Activated CD4-positive, alpha-beta T cell treated with anti-CD3 and anti-CD28 coated beads, Interleukin-2, amount 10 ng/mL, durations not matched to agents 24 days and 14 days (primary cell): ENCODE measurements at regions of chr4 and their contacts with region 1.

Region 1: GRCh38 chr4:118224239-118224829 is 128.5 kb downstream of the PRSS12 start:
- DNase-seq: no peak
- H3K4me3 Mint-ChIP-seq: no peak overlapping the region
- H3K27ac Mint-ChIP-seq: no peak overlapping the region
- H3K4me1 Mint-ChIP-seq: peaks cover 3% of the 10 kb centered on the region
- H3K27me3 Mint-ChIP-seq: peaks cover 11% of the 10 kb centered on the region

Region 2: DNA sequence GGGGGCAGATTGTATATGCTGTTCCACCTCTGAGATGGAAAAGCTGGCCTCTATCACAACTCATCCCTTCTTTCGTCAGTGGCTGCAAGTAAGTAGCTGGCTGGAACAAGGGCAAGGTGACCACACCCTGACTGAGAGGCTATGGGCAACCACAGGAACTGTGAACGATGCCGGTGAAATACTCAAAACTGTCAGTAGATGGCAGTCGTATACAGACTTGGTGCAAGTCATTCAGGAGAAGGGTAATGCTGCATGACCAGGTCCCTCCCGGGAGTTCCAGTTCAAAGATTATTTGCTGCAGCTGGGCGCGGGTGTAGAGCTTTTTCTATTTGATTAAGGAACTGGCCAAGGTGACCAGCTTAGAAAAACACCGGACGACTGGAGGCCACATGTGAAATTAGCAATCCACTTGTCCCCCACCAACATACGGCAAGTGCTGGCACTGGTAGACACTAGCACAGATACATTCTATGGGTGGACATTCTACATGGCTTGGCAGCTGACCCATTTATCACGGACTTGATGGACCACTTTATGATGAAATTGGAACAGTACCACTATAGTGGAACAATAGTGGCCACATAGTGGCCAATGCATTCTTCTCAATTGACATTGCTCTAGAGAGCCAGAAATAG is 1865.6 kb before region 1 on chr4:
- intact Hi-C with region 1: loop called (anchors 2 kb)
- DNase-seq: peak; percentile 87
- H3K4me3 Mint-ChIP-seq: no peak overlapping the region
- H3K27ac Mint-ChIP-seq: no peak overlapping the region
- H3K4me1 Mint-ChIP-seq: no peaks in the 10 kb centered on the region
- H3K27me3 Mint-ChIP-seq: no peaks in the 10 kb centered on the region

Region 3: GRCh38 chr4:117447925-117448324 is 776.4 kb before region 1 on chr4:
- intact Hi-C with region 1: loop called (anchors 10 kb)
- DNase-seq: peak; percentile 68
- H3K4me3 Mint-ChIP-seq: no peak overlapping the region
- H3K27ac Mint-ChIP-seq: no peak overlapping the region
- H3K4me1 Mint-ChIP-seq: no peaks in the 10 kb centered on the region
- H3K27me3 Mint-ChIP-seq: no peaks in the 10 kb centered on the region

Region 4: DNA sequence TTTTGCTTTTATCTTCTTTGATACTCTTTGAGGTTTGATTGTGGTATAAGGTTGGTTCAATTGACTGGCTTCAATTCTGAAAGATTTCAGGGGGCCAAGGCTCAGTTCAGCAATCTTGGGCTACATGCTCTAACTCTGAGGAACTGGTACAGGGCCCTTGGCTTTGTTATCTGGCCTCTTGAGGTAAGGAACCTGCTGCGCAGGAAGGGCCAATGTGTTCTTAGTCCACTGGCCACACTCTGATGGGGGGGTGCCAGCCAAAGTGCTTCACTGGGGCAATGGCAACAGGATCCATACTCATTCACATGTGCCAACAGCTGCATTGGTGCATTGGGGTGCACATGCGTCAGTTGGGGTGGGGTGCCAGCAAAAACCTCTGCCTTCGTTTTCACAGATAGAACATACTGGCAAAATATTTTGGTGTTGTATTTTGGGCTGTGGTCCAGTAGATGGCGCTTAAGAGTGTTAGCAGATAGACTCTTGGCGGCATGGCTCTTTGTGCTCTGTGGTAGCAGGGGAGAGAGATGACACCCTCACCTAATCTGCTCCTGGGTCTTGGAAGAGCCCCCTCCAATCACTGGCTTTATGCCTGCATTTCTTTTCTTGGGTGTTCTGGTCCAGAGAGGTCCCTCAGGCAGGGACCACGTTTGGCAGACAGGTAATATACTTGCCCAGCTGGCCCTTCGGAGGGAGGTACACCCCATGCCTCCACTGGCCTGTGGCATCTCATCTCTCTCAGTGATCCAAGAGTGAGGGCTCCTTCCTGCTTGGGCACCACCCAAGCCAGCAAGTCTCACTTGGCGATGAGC is 147.2 kb before region 1 on chr4:
- intact Hi-C with region 1: loop called (anchors 1 kb)
- DNase-seq: peak; percentile 75
- H3K4me3 Mint-ChIP-seq: no peak overlapping the region
- H3K27ac Mint-ChIP-seq: no peak overlapping the region
- H3K4me1 Mint-ChIP-seq: peaks cover 5% of the 10 kb centered on the region
- H3K27me3 Mint-ChIP-seq: peaks cover 5% of the 10 kb centered on the region

Region 5: DNA sequence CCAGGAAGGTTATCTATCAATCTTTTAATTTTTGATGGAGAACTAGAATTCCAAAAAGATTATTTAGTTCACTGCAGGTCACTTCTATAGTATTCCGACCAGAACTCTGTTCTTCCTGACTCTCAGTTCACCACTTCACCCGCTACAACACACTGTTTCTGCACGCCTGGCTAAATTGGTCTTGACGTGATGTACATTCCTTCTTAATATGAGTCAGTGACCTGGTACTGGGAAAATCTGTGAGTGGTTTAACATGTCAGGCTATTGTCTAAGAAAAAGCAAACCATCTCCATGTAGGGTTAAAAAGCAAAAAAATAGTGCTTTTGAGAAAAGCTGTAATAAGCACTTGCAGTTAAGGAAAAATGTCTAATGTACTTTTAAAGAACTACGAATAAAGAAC is 69.7 kb before region 1 on chr4:
- intact Hi-C with region 1: no loop called
- DNase-seq: no peak
- H3K4me3 Mint-ChIP-seq: no peak overlapping the region
- H3K27ac Mint-ChIP-seq: no peak overlapping the region
- H3K4me1 Mint-ChIP-seq: peaks cover 2% of the 10 kb centered on the region
- H3K27me3 Mint-ChIP-seq: no peaks in the 10 kb centered on the region

Region 6: DNA sequence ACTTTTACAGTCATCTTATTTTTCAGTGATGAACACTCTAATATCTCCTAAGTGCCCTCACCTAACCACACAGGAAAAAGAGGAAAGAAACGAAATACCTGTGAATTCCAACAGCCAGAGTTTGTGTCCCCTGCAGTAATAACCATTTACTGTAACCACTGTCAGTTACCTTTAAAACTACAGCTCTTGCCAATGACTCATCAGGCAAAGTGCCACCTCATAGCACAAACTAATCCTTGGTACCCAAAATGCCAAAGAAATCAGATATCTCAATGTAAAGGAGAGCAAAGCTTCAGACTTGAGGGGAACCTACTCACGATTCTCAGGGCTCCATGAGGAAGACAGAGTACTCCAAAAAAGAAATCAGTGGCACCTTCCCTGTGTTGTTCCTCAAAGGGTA is 43.6 kb before region 1 on chr4:
- intact Hi-C with region 1: no loop called
- DNase-seq: no peak
- H3K4me3 Mint-ChIP-seq: no peak overlapping the region
- H3K27ac Mint-ChIP-seq: no peak overlapping the region
- H3K4me1 Mint-ChIP-seq: peaks cover 8% of the 10 kb centered on the region
- H3K27me3 Mint-ChIP-seq: no peaks in the 10 kb centered on the region